Natural killer cell (primary cell): ENCODE measurements at regions of chr5 and their contacts with region 1.

Region 1: GRCh38 chr5:54229041-54229780 is 81.2 kb downstream of the ARL15 start:
- DNase-seq: peak; percentile 57 to 77
- ATAC-seq: peak; percentile 77 to 96 (median 91)
- H3K4me3 ChIP-seq: no peak overlapping the region
- H3K4me3 Mint-ChIP-seq: no peak overlapping the region
- H3K27ac ChIP-seq: no peak overlapping the region
- H3K27ac Mint-ChIP-seq: no peak overlapping the region
- H3K4me1 ChIP-seq: no peaks in the 10 kb centered on the region
- H3K4me1 Mint-ChIP-seq: peaks cover 37 to 39% of the 10 kb centered on the region in 2 donors
- H3K27me3 ChIP-seq: no peaks in the 10 kb centered on the region
- H3K27me3 Mint-ChIP-seq: no peaks in the 10 kb centered on the region
- CTCF ChIP-seq: peak; percentile 93

Region 2: GRCh38 chr5:52948418-52949076 is 1280.7 kb before region 1 on chr5:
- intact Hi-C with region 1: loop called (anchors 1 kb)
- DNase-seq: peak in 1 of 2 donors; percentile 79
- ATAC-seq: peak; percentile 97 to 99 (median 98)
- H3K4me3 ChIP-seq: no peak overlapping the region
- H3K4me3 Mint-ChIP-seq: no peak overlapping the region
- H3K27ac ChIP-seq: no peak overlapping the region
- H3K27ac Mint-ChIP-seq: peak overlapping the region in 1 of 2 donors; percentile 48
- H3K4me1 ChIP-seq: no peaks in the 10 kb centered on the region
- H3K4me1 Mint-ChIP-seq: peaks cover 7 to 19% of the 10 kb centered on the region in 2 donors
- H3K27me3 ChIP-seq: no peaks in the 10 kb centered on the region
- H3K27me3 Mint-ChIP-seq: no peaks in the 10 kb centered on the region
- CTCF ChIP-seq: peak; percentile 80

Region 3: GRCh38 chr5:53478411-53479044 is 750.7 kb before region 1 on chr5:
- intact Hi-C with region 1: loop called (anchors 10 kb)
- DNase-seq: peak in 1 of 2 donors; percentile 46
- ATAC-seq: peak in 1 of 3 donors; percentile 23
- H3K4me3 ChIP-seq: no peak overlapping the region
- H3K4me3 Mint-ChIP-seq: peak overlapping the region; percentile 92
- H3K27ac ChIP-seq: no peak overlapping the region
- H3K27ac Mint-ChIP-seq: no peak overlapping the region
- H3K4me1 ChIP-seq: peaks cover 29% of the 10 kb centered on the region
- H3K4me1 Mint-ChIP-seq: peaks cover 43 to 44% of the 10 kb centered on the region in 2 donors
- H3K27me3 ChIP-seq: peaks cover 31% of the 10 kb centered on the region
- H3K27me3 Mint-ChIP-seq: peaks cover 25 to 48% of the 10 kb centered on the region in 2 donors
- CTCF ChIP-seq: peak; percentile 32

Region 4: GRCh38 chr5:53965459-53965858 is 263.8 kb before region 1 on chr5:
- intact Hi-C with region 1: no loop called
- DNase-seq: no peak
- ATAC-seq: no peak
- H3K4me3 ChIP-seq: no peak overlapping the region
- H3K4me3 Mint-ChIP-seq: no peak overlapping the region
- H3K27ac ChIP-seq: no peak overlapping the region
- H3K27ac Mint-ChIP-seq: no peak overlapping the region
- H3K4me1 ChIP-seq: no peaks in the 10 kb centered on the region
- H3K4me1 Mint-ChIP-seq: peaks cover 0 to 5% of the 10 kb centered on the region in 2 donors
- H3K27me3 ChIP-seq: no peaks in the 10 kb centered on the region
- H3K27me3 Mint-ChIP-seq: no peaks in the 10 kb centered on the region
- CTCF ChIP-seq: no peak

Region 5: GRCh38 chr5:54217826-54218503 is 11.2 kb before region 1 on chr5:
- intact Hi-C with region 1: no loop called
- DNase-seq: peak in 1 of 2 donors; percentile 60
- ATAC-seq: peak in 2 of 3 donors; percentile 29 to 65
- H3K4me3 ChIP-seq: no peak overlapping the region
- H3K4me3 Mint-ChIP-seq: no peak overlapping the region
- H3K27ac ChIP-seq: no peak overlapping the region
- H3K27ac Mint-ChIP-seq: no peak overlapping the region
- H3K4me1 ChIP-seq: no peaks in the 10 kb centered on the region
- H3K4me1 Mint-ChIP-seq: peaks cover 23% of the 10 kb centered on the region in 2 donors
- H3K27me3 ChIP-seq: no peaks in the 10 kb centered on the region
- H3K27me3 Mint-ChIP-seq: no peaks in the 10 kb centered on the region
- CTCF ChIP-seq: peak; percentile 63

Region 6: DNA sequence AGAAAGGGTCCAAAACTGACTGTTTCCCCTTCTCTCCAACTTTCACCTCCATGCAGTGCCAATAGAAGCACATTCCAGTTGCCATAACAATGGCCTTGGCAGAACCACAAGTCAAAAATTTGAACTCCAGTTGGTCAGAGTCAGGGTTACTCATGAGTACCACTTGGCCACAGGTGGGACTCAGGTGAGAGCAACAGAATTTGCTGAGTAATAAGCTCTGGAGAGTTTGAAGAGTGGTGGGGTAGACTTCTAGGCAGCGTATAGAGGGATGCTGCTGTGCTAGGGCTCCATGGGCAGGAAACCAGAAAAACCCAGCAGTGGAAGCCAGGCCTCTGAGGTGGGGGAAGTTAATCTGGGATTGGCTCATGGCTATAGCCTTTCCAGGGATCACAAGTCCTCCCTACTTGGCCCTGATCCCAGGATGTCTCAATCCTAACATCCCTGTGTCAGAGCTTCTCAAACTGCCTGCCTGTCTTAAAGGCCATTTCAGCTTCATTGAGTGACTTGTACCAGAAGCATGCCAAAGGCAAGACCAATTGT is 318.6 kb after region 1 on chr5:
- intact Hi-C with region 1: no loop called
- DNase-seq: no peak
- ATAC-seq: no peak
- H3K4me3 ChIP-seq: no peak overlapping the region
- H3K4me3 Mint-ChIP-seq: no peak overlapping the region
- H3K27ac ChIP-seq: no peak overlapping the region
- H3K27ac Mint-ChIP-seq: peak overlapping the region; percentile 19 to 66
- H3K4me1 ChIP-seq: no peaks in the 10 kb centered on the region
- H3K4me1 Mint-ChIP-seq: peaks cover 42 to 48% of the 10 kb centered on the region in 2 donors
- H3K27me3 ChIP-seq: no peaks in the 10 kb centered on the region
- H3K27me3 Mint-ChIP-seq: no peaks in the 10 kb centered on the region
- CTCF ChIP-seq: no peak